WTC11 (cell line): ENCODE measurements at regions of chr11 and their contacts with region 1.

Region 1: GRCh38 chr11:69881449-69882269 is 62.4 kb upstream of the FGF3 start:
- DNase-seq: peak; percentile 56
- ATAC-seq: peak; percentile 75
- H3K4me3 Mint-ChIP-seq: no peak overlapping the region
- H3K27ac Mint-ChIP-seq: no peak overlapping the region
- H3K4me1 Mint-ChIP-seq: 0 out of 2 replicates have a peak, but pooled peaks cover 2% of the 10 kb centered on the region
- H3K27me3 Mint-ChIP-seq: no peaks in the 10 kb centered on the region
- CTCF ChIP-seq: no peak; the same call in 1 of the 2 replicates

Region 2: GRCh38 chr11:69791276-69792180 is 90.1 kb before region 1 on chr11:
- CTCF ChIA-PET with region 1: no interaction called
- POLR2A ChIA-PET with region 1: no interaction called
- DNase-seq: no peak
- ATAC-seq: no peak
- H3K4me3 Mint-ChIP-seq: no peak overlapping the region
- H3K27ac Mint-ChIP-seq: no peak overlapping the region
- H3K4me1 Mint-ChIP-seq: peaks cover 8% of the 10 kb centered on the region
- H3K27me3 Mint-ChIP-seq: no peaks in the 10 kb centered on the region
- CTCF ChIP-seq: no peak

Region 3: DNA sequence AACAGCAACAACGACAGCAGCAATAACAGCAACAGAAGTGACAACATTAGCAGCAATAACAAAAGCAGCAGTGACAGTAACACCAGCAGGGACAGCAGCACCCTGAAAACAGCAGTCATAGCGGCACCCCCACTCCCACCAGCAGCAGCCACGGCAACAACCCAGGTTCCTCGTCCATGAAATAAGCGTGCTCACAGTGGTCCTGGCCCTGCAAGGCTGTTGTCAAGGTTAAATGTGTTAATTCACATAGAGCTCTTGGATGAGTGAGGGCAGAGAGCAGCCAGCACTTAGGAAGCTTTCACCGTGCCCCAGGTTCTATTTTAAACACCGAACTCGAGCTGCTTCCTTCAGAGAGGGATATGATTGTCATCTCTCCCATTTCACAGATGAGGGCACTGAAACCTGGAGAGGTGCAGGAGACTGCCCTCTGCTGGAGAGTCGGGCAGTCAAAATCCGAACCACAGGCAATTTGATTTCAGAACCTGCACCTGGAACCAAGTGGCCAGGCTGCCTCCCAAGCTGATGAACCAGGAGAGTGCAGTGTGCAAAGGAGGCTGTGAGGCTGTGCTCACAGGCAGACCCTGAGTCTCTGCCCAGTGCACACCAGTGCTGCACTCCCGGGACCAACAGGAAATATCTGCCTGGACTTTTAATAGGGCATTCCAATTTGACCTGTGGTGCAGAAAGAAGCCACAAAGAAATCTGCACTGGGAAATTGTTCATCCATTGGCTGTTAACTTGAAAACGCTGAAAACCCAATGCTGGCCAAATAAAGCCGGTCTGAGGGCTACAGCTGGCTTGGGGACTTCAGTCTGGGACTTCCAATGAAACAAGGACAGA is 39.6 kb before region 1 on chr11:
- CTCF ChIA-PET with region 1: interaction called, 21 read pairs
- POLR2A ChIA-PET with region 1: no interaction called
- DNase-seq: peak; percentile 65
- ATAC-seq: peak; percentile 73
- H3K4me3 Mint-ChIP-seq: no peak overlapping the region
- H3K27ac Mint-ChIP-seq: no peak overlapping the region
- H3K4me1 Mint-ChIP-seq: peaks cover 4% of the 10 kb centered on the region
- H3K27me3 Mint-ChIP-seq: no peaks in the 10 kb centered on the region; the same call in 1 of the 2 replicates
- CTCF ChIP-seq: peak; percentile 37; the same call in 1 of the 2 replicates